Posterior cingulate gyrus (tissue), 11 donors: ENCODE measurements at regions of chr1 and their contacts with region 1.

Region 1: GRCh38 chr1:198756470-198756869 is 117.6 kb downstream of the PTPRC start:
- DNase-seq: no peak

Region 2: GRCh38 chr1:198102454-198102827 is 654.0 kb before region 1 on chr1:
- intact Hi-C with region 1: no loop called
- DNase-seq: no peak

Region 3: GRCh38 chr1:199551967-199552565 is 795.6 kb after region 1 on chr1:
- intact Hi-C with region 1: loop called (anchors 2 kb)
- DNase-seq: peak in 5 of 10 donors; percentile 11 to 40 (median 25)